ENCODE measurements at regions of chr2 and their contacts with region 1.

Region 1: DNA sequence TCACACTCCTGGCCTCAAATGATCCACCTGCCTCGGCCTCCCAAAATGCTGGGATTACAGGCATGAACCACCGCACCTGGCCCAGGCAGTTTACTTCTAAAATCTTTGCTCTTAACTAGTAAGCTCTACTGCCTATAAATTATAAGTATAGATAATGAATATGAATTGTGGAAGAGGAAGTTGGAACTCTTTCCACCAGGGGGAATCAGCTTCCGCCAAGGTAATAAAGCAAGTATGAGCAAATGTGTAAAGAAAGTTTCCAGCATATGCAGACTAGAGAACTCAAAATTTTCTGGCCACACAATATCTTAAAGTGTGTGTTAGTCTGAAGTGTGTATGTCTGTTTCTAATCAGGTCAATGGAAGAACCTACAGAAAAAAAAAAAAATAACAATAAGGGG is 68.1 kb downstream of the RMDN2 start:
- DNase-seq: no peak
- H3K4me3 ChIP-seq: no peak overlapping the region
- H3K27ac ChIP-seq: no peak overlapping the region
- H3K4me1 ChIP-seq: no peaks in the 10 kb centered on the region
- H3K27me3 ChIP-seq: no peaks in the 10 kb centered on the region
- CTCF ChIP-seq: no peak
- EP300 ChIP-seq: no peak
- POLR2A ChIP-seq: no peak

Region 2: DNA sequence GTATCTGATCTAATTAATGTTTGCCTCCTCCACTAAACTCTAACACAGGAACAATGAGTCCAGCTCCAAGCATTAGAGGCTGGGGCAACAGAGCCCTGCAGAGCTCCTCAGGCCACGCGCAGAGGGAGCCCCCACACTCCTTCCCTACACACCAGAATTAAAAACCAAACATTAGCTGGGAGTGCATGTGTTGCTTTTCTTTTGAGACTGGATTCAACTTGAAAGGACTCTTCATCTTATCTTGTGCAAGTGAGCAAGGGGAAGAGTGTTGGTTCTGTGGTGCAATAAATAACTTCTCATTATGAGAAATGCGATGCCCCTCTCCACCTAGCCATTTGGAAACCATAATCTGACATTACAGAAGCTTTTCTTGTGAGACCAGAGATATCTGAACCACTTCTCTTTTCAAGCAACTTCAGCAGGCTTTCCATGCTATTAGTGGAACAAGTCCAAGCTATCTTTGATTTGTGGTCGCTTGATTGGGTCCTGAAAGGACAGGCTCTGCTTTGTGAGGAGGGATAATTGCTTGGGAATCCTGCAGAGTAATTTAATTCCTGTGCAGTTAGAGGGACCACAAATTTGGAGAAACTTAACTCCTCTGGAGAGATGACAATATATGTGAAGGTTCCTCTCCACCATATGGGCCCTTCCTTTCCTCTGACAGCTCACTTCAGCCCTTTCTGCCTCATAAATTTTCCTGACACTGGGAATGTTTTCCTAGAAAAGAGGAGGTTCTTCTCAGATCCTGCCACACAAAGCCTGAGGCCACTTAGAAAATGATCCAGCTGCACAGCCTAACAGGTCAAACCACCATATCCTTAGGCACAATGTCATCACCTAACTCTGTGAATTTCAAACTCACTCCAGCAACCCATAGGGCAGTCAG is 271.5 kb after region 1 on chr2:
- in situ Hi-C with region 1: no loop called
- intact Hi-C with region 1: loop called (anchors 5 kb)
- DNase-seq: no peak
- H3K4me3 ChIP-seq: no peak overlapping the region
- H3K27ac ChIP-seq: no peak overlapping the region
- H3K4me1 ChIP-seq: no peaks in the 10 kb centered on the region
- H3K27me3 ChIP-seq: no peaks in the 10 kb centered on the region
- CTCF ChIP-seq: no peak
- EP300 ChIP-seq: no peak
- POLR2A ChIP-seq: no peak